Vagina (tissue), 2 donors: ENCODE measurements at regions of chr3 and their contacts with region 1.

Region 1: GRCh38 chr3:126357295-126358037 is at the start of gene KLF15:
- DNase-seq: no peak
- H3K4me3 ChIP-seq: peak within 1 kb of the TSS; percentile 64 to 98
- H3K27ac ChIP-seq: peak within 1 kb of the TSS; percentile 87
- H3K4me1 ChIP-seq: peaks cover 23% of the 10 kb centered on the region
- H3K27me3 ChIP-seq: no peaks in the 10 kb centered on the region
- CTCF ChIP-seq: no peak
- POLR2A ChIP-seq: peak in 1 of 2 donors; percentile 91
- total RNA-seq, gene KLF15: 25.3 TPM

Region 2: DNA sequence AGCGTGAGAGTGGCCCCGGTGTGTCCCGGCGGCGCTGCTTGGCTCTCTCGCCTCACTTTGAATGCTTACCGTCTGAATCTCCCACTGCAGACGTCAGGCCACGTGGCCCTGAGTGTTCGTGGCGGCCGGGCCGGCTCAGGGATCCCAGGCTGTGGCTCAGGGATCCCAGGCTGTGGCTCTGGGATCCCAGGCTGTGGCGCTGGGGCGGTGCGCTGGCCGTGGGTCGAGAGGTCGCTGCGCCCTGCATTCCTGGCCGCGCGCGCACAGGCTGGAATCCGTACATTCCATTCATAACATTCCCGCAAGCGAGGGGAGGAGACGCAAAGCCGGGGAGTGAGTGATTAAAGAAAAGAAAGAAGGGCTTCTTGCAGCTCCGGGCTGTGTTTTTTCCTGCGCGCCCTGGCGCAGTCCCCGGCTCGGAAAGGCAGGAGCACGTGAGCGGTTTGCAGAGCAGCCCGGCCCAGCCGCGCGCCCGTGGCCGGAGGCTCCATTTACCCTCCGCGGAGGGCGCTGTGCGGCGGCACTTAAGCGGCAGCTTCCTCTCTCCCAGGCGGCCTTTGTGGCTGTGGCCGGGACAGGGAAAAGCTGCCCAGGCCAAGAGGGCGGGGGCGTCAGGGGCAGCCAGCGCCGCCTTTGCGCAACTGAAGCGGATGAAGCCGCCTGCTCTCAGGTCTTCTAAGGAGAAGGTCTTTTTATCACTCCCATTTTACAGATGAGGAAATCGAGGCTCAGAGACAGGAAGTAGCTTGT is 90.1 kb before region 1 on chr3:
- intact Hi-C with region 1: loop called (anchors 10 kb)
- DNase-seq: peak in 1 of 2 donors; percentile 88
- H3K4me3 ChIP-seq: peak overlapping the region; percentile 22 to 32
- H3K27ac ChIP-seq: peak overlapping the region; percentile 76
- H3K4me1 ChIP-seq: peaks cover 42% of the 10 kb centered on the region
- H3K27me3 ChIP-seq: no peaks in the 10 kb centered on the region
- CTCF ChIP-seq: no peak
- POLR2A ChIP-seq: no peak

Region 3: DNA sequence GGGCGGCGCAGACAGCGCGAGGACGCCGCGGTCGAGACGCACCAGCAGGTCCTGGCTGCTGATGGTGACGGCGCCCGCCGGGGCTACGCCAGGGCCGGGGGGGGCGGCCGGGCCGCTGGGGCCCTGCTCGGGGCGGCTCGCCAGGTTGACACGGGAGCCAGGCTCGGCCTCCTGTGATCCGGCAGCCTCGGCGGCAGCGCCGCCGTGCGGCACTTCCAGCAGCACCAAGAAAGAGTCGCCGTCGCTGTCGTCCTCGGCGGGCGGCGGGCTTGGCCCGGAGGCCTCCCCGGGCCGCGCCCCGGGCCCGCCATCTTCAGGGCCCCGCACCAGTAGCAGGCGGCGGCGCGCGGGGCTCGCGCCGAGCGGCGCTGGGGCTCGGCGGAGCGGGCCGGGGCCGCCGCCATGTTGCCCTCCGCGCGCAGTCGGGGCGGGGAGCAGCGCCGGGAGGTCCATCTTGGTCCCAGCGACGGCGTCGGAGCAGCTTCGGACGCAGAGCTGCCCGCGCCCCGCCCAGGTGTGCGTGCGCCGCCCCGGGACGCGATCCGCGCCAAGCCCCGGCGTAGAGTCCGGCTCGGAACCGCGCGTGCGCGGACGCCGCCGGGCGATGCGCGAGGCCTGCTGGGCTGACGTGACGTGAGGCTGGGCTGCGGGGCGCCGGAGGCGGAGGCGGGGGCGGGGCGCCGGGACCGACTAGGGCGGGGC is 118.1 kb after region 1 on chr3 and contains the start of gene ZXDC:
- intact Hi-C with region 1: loop called (anchors 10 kb)
- DNase-seq: no peak
- H3K4me3 ChIP-seq: peak within 1 kb of the TSS; percentile 74 to 88
- H3K27ac ChIP-seq: peak within 1 kb of the TSS; percentile 90
- H3K4me1 ChIP-seq: peaks cover 51% of the 10 kb centered on the region
- H3K27me3 ChIP-seq: no peaks in the 10 kb centered on the region
- CTCF ChIP-seq: no peak
- POLR2A ChIP-seq: peak in 1 of 2 donors; percentile 88
- total RNA-seq, gene ZXDC: 36.8 TPM